Activated CD4-positive, alpha-beta memory T cell treated with anti-CD3 and anti-CD28 coated beads for 36 hours (primary cell): ENCODE measurements at regions of chr3 and their contacts with region 1.

Region 1: GRCh38 chr3:180989291-180990163 is at the start of gene DNAJC19:
- DNase-seq: peak; percentile 95
- H3K4me3 Mint-ChIP-seq: peak within 1 kb of the TSS; percentile 94
- H3K27ac Mint-ChIP-seq: peak within 1 kb of the TSS; percentile 93
- H3K4me1 Mint-ChIP-seq: peaks cover 31% of the 10 kb centered on the region
- H3K27me3 Mint-ChIP-seq: no peaks in the 10 kb centered on the region
- total RNA-seq, gene DNAJC19: 68.6 to 75.0 TPM

Region 2: GRCh38 chr3:179604321-179605078 is 1385.0 kb before region 1 on chr3 and contains the starts of genes MRPL47 and NDUFB5:
- CTCF ChIA-PET with region 1: no interaction called
- POLR2A ChIA-PET with region 1: no interaction called
- intact Hi-C with region 1: loop called (anchors 5 kb)
- DNase-seq: peak; percentile 96
- H3K4me3 Mint-ChIP-seq: peak within 1 kb of the TSS; percentile 99
- H3K27ac Mint-ChIP-seq: peak within 1 kb of the TSS; percentile 98
- H3K4me1 Mint-ChIP-seq: peaks cover 40% of the 10 kb centered on the region
- H3K27me3 Mint-ChIP-seq: no peaks in the 10 kb centered on the region
- total RNA-seq, gene MRPL47: 51.4 to 54.0 TPM
- total RNA-seq, gene NDUFB5: 133 to 147 TPM

Region 3: DNA sequence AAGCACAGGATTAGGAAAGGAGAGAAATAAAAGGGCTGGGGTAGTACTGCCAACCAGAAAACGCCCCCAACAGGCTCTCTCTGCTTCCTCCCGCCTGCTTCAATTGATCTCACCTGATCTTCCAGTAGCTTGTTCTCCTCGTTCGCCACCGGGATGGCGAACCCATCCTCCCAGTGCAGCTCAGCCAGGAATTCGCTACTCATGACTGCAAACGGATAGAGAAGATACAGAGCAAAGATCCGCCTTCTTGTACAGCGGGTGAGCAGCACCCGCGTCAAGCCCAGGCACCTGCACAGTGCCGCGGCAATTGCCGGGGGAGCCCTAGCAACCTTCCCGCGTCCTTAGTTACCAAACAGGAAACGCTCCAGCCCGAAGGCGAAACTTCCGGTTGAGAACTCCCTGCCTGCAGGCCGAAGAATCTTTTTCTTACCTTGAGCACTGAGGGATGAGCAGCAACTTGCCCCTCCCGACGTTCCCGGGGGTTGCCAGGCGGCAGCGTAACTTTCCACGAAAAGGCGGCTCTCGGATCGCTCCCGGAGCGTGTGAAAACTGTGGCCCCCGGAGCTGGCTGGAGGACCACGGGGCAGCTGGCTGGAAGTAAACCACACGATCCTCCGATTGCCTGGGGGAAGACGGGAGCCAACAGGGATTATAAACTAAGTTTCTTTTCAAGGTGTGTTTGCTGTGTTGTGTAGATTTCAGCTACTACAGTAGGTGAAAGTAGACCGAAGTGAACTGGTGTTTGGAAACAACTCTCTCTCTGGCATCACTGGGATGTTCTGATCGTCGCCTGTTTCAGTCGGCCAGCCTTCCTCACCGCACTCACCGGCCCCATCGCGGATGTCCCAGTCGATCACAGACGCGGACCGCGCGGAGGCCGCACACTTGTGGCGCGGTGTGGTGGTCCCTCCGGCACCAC is 310.1 kb before region 1 on chr3 and contains the start of gene CCDC39:
- CTCF ChIA-PET with region 1: no interaction called
- POLR2A ChIA-PET with region 1: no interaction called
- intact Hi-C with region 1: loop called (anchors 5 kb)
- DNase-seq: peak; percentile 71
- H3K4me3 Mint-ChIP-seq: peak within 1 kb of the TSS; percentile 75
- H3K27ac Mint-ChIP-seq: no peak within 1 kb of the TSS
- H3K4me1 Mint-ChIP-seq: peaks cover 14% of the 10 kb centered on the region
- H3K27me3 Mint-ChIP-seq: peaks cover 27% of the 10 kb centered on the region
- total RNA-seq, gene CCDC39: not detected

Region 4: GRCh38 chr3:180912304-180913296 is 76.9 kb before region 1 on chr3 and contains the start of gene FXR1:
- CTCF ChIA-PET with region 1: interaction called, 5 read pairs
- POLR2A ChIA-PET with region 1: interaction called, 11 read pairs
- intact Hi-C with region 1: loop called (anchors 1 kb)
- DNase-seq: peak; percentile 96
- H3K4me3 Mint-ChIP-seq: peak within 1 kb of the TSS; percentile 94
- H3K27ac Mint-ChIP-seq: peak within 1 kb of the TSS; percentile 97
- H3K4me1 Mint-ChIP-seq: peaks cover 51% of the 10 kb centered on the region
- H3K27me3 Mint-ChIP-seq: no peaks in the 10 kb centered on the region
- total RNA-seq, gene FXR1: 165 to 169 TPM

Region 5: DNA sequence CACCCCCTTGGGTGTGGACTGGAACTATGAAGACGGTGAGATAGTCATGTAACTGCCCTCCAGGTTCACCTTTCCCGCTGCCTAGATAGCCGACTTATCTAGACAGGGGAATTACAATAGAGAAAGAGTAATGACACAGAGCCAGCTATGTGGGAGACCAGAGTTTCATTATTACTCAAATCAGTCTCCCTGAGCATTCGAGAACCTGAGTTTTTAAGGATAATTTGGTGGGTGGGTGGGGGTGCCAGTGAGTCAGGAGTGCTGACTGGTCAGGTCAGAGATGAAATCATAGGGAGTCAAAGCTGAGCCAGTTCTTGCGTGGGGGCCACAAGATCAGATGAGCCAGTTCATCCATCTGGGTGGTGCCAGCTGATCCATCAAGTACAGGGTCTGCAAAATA is 19.7 kb after region 1 on chr3:
- CTCF ChIA-PET with region 1: interaction called, 5 read pairs
- POLR2A ChIA-PET with region 1: no interaction called
- intact Hi-C with region 1: loop called (anchors 1 kb)
- DNase-seq: peak; percentile 69
- H3K4me3 Mint-ChIP-seq: no peak overlapping the region
- H3K27ac Mint-ChIP-seq: no peak overlapping the region
- H3K4me1 Mint-ChIP-seq: peaks cover 13% of the 10 kb centered on the region
- H3K27me3 Mint-ChIP-seq: peaks cover 4% of the 10 kb centered on the region